ENCODE measurements at regions of chr18 and their contacts with region 1.

Region 1: GRCh38 chr18:32470713-32471633 is at the start of gene GAREM1:
- DNase-seq: peak; percentile 95
- ATAC-seq: peak; percentile 97
- total RNA-seq, gene GAREM1: 12.7 to 19.0 TPM

Region 2: DNA sequence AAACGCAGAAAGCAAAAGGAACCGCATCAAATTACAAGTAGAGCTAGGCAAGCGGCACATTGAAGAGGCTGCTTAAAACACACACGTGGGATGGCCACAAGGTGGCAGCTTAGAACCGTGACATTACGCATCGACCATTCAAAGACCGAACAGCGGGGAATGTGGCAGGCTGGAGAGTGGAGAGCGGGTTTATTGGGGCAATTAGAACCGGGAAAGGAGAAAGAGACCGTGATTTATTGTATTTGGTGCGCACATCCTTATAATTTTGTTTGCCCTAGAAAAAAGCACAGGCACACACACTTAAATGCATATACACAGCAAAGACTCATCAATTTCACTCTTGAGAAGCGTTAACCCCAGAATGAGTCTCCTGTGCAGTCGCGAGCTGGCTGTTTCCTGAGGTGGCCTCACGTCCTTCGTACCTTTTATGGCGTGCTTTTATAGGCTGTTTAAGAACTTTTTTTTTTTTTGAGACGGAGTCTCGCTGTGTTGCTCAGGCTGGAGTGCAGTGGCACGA is 312.8 kb before region 1 on chr18:
- intact Hi-C with region 1: loop called in 1 of 2 experiments (anchors 2 kb)
- DNase-seq: peak; percentile 77
- ATAC-seq: peak; percentile 98

Region 3: DNA sequence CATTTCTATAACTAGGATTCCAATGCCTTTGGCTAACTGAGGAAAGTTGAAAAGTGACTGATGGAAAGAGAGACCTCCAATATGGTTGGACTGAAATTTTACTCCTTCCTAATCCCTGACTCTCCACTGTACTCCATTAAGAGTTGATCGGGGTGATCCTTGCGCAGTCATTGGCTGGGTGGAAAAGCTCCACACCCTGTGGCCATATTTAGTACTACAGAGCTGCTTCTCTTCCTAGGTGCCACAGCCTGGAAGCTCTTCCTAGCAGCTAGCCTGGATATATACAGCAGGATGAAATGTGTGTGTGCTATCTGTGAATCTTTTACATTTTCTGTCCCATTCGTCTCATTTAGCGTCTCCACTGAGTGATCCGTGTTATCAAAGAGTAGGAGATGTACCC is 210.0 kb before region 1 on chr18:
- intact Hi-C with region 1: loop called in 1 of 2 experiments (anchors 10 kb)
- DNase-seq: no peak
- ATAC-seq: no peak

Region 4: DNA sequence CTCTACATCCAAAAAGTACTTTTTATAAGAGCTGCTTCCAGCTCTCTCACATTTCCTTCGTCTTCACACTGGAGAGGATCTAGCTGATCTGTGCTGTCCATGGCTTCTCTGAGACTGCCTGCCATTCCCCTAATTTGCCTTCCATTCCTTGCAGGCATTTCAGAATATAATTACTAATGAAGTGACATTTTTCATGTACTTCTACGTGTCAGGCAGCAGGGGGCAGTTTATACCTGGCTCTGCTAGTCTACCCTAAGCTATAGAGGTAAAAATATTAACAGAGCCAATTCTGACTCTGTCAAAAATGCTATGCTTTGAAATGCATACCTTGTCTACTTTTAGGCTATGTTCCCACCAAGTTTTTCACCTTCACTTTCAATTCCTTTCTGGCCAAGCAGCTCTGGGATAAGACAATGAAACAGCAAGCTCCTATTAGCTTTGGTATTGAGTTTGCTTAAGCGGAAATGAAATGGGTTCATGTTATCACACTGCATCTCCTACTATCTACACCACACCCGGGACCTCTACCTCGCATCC is 199.2 kb before region 1 on chr18:
- intact Hi-C with region 1: loop called (anchors 2 to 10 kb)
- DNase-seq: no peak
- ATAC-seq: peak; percentile 62 to 79

Region 5: GRCh38 chr18:32289483-32290075 is 181.4 kb before region 1 on chr18:
- intact Hi-C with region 1: loop called in 1 of 2 experiments (anchors 5 kb)
- DNase-seq: no peak
- ATAC-seq: peak in 1 of 2 donors; percentile 65

Region 6: DNA sequence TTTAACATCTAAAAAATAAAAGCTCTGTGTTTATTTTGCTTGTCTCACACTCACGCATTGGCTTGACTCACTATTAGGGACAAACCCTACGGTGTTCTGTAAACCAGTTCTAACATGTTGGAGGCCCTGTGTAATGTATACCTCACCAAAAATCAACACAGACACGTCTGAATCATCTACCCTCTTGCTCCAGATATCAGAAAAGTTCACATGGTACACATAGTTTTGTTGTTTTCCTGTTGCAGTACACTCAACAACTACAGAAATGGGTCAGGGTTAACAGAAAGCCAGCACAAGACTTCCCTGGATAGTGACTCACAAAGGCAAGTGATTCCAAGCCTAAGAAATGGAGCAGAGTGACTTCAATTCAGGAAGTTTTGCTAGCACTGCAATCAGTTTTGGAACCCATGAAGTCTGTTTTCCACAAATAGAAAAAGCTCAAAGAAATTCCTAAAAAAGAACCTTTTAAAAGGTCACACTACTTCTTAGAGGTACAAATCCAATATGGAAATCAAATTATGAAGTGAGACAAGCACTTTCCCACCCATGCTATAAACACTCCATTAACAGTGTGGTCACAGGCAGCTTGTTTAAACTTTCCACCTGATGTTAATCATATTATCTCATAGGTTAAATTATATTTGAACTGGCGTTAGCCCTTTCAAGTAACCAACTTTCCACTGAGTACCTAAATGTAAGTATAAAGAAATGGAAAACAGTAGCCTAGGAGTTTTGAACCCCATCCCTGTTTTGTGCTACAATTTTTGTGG is 87.7 kb before region 1 on chr18:
- intact Hi-C with region 1: loop called in 1 of 2 experiments (anchors 10 kb)
- DNase-seq: no peak
- ATAC-seq: peak; percentile 66 to 81

Measured in left cardiac atrium (tissue), 4 donors.